Ovary (tissue), 10 donors: ENCODE measurements at regions of chr6 and their contacts with region 1.

Region 1: DNA sequence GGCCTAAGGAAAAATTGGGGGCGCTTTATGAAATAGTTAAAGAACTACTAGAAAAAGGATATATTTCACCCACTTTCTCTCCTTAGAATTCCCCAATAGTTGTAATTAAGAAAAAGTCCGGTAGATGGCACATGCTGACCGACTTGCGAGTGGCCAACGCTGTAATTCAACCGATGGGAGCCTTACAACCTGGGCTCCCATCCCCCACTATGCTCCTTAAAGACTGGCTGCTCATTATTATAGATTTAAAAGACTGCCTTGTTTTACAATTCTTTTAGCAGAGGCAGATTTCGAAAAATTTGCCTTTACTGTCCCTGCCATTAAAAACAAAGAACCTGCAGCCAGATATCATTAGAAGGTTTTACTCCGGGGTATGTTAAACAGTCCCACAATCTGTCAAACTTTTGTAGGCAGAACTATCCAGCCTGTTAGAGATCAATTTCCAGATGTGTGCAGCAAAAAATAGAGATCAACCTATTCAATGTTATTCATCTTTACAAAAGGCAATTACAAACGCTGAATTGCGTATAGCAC is 58.5 kb upstream of the PRSS16 start:
- DNase-seq: peak; percentile 38 to 62 (median 56)
- H3K4me3 ChIP-seq: peak overlapping the region; percentile 48
- H3K27ac ChIP-seq: peak overlapping the region; percentile 26 to 68
- H3K4me1 ChIP-seq: no peaks in the 10 kb centered on the region
- H3K27me3 ChIP-seq: no peaks in the 10 kb centered on the region
- CTCF ChIP-seq: peak; percentile 51 to 58 (median 54)
- EP300 ChIP-seq: no peak
- POLR2A ChIP-seq: no peak

Region 2: GRCh38 chr6:27132532-27133280 is 56.2 kb before region 1 on chr6:
- intact Hi-C with region 1: no loop called
- DNase-seq: peak; percentile 71 to 87 (median 77)
- H3K4me3 ChIP-seq: peak overlapping the region; percentile 56
- H3K27ac ChIP-seq: peak overlapping the region; percentile 15 to 64
- H3K4me1 ChIP-seq: no peaks in the 10 kb centered on the region
- H3K27me3 ChIP-seq: no peaks in the 10 kb centered on the region
- CTCF ChIP-seq: no peak
- EP300 ChIP-seq: no peak
- POLR2A ChIP-seq: peak; percentile 68

Region 3: GRCh38 chr6:27479319-27480182 is 290.6 kb after region 1 on chr6:
- intact Hi-C with region 1: loop called in 1 of 4 experiments (anchors 5 kb)
- DNase-seq: peak; percentile 77 to 92 (median 90)
- H3K4me3 ChIP-seq: peak overlapping the region; percentile 88
- H3K27ac ChIP-seq: peak overlapping the region; percentile 93 to 98
- H3K4me1 ChIP-seq: peaks cover 2% of the 10 kb centered on the region
- H3K27me3 ChIP-seq: no peaks in the 10 kb centered on the region
- CTCF ChIP-seq: no peak
- EP300 ChIP-seq: no peak
- POLR2A ChIP-seq: peak; percentile 25

Region 4: DNA sequence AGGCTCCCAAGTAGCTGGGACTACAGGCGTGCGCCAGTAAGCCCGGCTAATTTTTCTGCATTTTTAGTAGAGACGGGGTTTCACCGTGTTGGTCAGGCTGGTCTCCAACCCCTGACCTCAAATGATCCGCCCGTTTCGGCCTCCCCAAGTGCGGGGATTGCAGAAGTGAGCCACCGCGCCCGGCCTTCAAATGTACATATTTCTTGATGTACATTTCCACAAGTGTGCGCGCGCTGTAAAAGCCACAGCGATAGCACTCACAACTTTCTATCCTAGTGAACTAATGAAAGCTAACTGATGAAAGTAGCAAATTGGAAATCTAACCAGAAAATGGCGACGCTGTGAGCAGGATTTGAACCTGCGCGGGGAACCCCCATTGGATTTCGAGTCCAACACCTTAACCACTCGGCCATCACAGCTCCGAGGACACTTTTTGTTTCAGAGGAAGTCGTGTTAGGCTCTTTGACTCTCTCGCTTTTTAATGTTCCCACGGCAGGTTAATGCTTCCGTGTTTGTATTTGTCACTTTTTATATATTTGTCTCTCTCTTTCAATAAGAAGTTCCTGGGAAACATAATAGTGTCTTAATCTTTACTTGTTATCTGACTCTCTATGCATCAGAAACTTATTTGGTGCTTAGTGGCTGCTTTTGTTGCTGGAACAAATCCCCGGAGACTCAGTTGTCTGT is 483.3 kb after region 1 on chr6:
- intact Hi-C with region 1: loop called in 1 of 4 experiments (anchors 10 kb)
- DNase-seq: peak in 4 of 5 donors; percentile 47 to 70 (median 60)
- H3K4me3 ChIP-seq: peak overlapping the region; percentile 11
- H3K27ac ChIP-seq: no peak overlapping the region
- H3K4me1 ChIP-seq: peaks cover 3% of the 10 kb centered on the region
- H3K27me3 ChIP-seq: no peaks in the 10 kb centered on the region
- CTCF ChIP-seq: no peak
- EP300 ChIP-seq: no peak
- POLR2A ChIP-seq: no peak

Region 5: DNA sequence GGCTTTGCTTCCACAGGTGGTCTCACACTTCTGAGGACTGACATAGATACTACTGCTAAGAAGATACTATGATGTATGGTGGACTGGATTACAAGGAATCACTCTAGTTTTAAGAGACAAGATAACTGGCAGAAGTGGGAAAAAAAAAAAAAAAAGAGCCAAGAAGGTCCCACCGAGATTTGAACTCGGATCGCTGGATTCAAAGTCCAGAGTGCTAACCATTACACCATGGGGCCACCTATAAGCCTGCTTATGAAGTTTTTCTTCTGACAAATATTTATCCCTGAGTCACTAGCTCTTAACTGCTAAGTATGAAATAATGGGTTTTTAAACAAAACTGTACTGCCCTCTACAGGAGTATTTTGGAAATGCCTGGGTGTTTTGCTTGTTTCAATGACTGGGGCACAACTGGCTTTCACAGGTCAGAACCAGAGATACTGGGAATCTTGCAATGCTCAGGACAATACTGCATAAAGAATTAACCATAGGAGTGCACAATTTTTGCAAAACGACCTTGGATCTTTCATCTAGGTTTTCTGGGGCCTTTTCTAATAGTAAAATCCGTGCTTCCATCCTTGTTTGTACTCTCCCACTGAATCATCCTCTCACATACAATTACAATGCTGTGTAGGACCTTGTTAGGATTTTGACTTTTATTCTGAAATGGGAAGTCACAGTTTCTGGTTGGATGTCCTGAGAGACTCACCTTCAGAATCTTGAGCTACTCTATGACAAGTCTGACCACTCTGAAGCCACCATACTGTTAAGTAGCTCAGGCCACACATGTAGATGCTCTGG is 606.9 kb after region 1 on chr6:
- intact Hi-C with region 1: loop called in 1 of 4 experiments (anchors 5 kb)
- DNase-seq: peak in 2 of 5 donors; percentile 37 to 51
- H3K4me3 ChIP-seq: no peak overlapping the region
- H3K27ac ChIP-seq: no peak overlapping the region
- H3K4me1 ChIP-seq: no peaks in the 10 kb centered on the region
- H3K27me3 ChIP-seq: no peaks in the 10 kb centered on the region
- CTCF ChIP-seq: peak; percentile 30 to 68 (median 64)
- EP300 ChIP-seq: no peak
- POLR2A ChIP-seq: no peak